Tibial artery (tissue), 4 donors: ENCODE measurements at regions of chr6 and their contacts with region 1.

Region 1: GRCh38 chr6:3751730-3752542 is 423 bp upstream of the PXDC1 start:
- DNase-seq: peak; percentile 89 to 96
- H3K4me3 ChIP-seq: peak overlapping the region; percentile 96 to 97
- H3K27ac ChIP-seq: peak overlapping the region; percentile 99
- H3K4me1 ChIP-seq: peaks cover 0 to 38% (median 21%) of the 10 kb centered on the region in 4 donors
- H3K27me3 ChIP-seq: no peaks in the 10 kb centered on the region
- CTCF ChIP-seq: peak; percentile 40 to 61

Region 2: DNA sequence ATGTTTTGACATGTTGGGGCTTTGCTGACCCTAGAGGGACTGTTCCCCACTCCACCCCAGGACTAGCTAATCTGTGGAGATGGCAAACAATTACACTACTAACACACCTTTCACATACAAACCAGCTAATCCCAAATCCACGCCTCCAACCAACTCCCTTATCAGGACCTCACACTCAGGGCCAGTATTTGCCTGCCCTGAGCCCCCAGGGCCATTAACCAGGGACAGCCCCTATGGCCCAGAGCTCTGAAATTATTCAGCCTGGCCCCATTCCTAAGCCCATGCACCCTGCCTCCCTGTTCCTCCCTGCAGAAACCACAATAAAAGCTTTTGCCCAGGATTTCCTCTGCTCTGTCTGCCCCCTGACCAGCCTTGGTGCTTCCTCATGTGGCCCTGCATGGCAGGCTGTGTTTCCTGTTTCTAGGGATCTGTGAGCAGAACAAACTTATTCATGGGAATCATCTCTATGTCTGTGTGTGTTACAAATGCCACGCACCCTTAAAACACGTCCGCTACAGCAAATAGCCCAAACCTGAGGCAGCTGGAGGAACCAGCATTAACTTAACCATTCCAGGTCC is 121.6 kb before region 1 on chr6:
- intact Hi-C with region 1: no loop called
- DNase-seq: no peak
- H3K4me3 ChIP-seq: no peak overlapping the region
- H3K27ac ChIP-seq: no peak overlapping the region
- H3K4me1 ChIP-seq: peaks cover 0 to 7% (median 0%) of the 10 kb centered on the region in 4 donors
- H3K27me3 ChIP-seq: peaks cover 0 to 13% of the 10 kb centered on the region in 2 donors
- CTCF ChIP-seq: no peak

Region 3: DNA sequence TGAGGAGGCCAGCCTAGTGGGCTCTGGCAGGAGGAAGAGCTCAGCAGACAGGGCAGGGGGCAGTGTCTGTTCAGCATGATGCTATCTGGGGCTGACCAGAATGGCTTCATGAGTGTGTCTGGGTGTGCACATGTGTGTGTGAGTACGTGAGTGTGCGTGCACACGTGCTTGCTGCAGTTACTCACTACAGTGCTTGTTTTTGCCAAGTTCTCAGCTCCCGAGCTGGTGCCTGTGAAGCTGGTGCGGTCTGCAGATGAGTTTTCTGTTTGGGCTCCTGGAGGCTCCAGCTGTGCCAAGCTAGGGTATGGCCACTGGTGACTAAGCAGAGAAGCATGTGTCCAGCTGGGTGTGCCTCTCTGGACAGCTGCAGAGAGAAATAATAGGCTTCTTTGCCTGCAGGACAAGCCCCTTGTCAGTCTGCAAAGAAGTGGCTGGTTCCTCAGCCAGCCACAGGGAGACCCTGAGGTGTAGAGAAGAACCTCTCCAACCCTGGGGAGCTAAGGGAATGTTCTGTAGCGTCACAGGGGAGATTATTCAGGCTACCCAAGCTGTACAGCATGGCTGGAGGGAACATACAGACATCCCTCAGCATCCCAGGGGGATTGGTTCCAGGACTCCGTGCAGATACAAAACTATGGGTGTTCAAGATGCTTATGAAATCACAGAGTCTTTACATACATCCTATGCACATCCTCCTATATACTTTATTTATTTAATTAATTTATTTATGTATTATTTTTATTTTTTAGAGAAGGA is 57.0 kb after region 1 on chr6:
- intact Hi-C with region 1: loop called (anchors 5 kb)
- DNase-seq: peak; percentile 80 to 89
- H3K4me3 ChIP-seq: no peak overlapping the region
- H3K27ac ChIP-seq: peak overlapping the region; percentile 77 to 81
- H3K4me1 ChIP-seq: peaks cover 0 to 94% (median 50%) of the 10 kb centered on the region in 4 donors
- H3K27me3 ChIP-seq: no peaks in the 10 kb centered on the region
- CTCF ChIP-seq: no peak

Region 4: DNA sequence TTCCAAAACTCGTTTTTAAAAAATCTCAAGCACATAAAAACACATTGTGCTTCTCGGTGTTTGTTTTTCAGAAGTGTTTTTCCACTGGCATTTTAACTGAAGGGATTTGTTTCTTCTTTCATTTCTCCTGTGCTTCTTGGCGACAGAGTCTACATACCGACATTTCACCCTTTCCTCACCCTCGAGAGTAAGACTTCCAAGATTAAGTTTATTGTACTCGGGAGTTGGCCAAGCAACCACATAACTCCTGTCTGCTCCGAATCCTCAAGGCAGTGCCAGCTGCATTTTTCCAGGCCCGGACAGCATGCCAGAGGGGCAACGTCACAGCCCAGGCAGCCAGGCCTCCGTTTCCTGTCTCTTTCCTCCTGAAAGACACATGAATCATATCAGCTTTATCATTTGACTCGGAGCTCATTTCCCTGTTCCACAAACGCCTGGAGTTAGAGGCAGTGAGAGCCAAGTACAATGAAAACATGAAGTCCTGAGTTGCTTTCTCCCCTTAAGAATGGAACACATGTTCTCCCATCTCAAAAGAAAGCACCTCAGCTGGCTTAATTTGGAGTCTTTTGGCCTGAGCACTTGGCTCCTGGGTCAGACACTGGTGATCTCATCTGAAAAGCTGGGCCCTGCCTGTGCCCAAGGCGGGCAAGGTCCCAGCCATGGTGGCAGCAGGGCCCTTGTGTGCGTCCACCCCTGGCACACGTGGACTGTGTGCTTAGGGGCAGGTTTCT is 74.1 kb after region 1 on chr6:
- intact Hi-C with region 1: loop called (anchors 5 kb)
- DNase-seq: peak; percentile 92 to 99
- H3K4me3 ChIP-seq: peak overlapping the region; percentile 26 to 40
- H3K27ac ChIP-seq: peak overlapping the region; percentile 83 to 86
- H3K4me1 ChIP-seq: peaks cover 0 to 61% (median 47%) of the 10 kb centered on the region in 4 donors
- H3K27me3 ChIP-seq: no peaks in the 10 kb centered on the region
- CTCF ChIP-seq: no peak

Region 5: GRCh38 chr6:3848925-3849605 is 97.1 kb after region 1 on chr6 and contains the start of gene FAM50B:
- intact Hi-C with region 1: loop called (anchors 5 kb)
- DNase-seq: peak; percentile 91 to 97
- H3K4me3 ChIP-seq: peak within 1 kb of the TSS; percentile 53 to 55
- H3K27ac ChIP-seq: peak within 1 kb of the TSS; percentile 75
- H3K4me1 ChIP-seq: peaks cover 0 to 46% (median 12%) of the 10 kb centered on the region in 4 donors
- H3K27me3 ChIP-seq: no peaks in the 10 kb centered on the region
- CTCF ChIP-seq: peak; percentile 84 to 99

Region 6: DNA sequence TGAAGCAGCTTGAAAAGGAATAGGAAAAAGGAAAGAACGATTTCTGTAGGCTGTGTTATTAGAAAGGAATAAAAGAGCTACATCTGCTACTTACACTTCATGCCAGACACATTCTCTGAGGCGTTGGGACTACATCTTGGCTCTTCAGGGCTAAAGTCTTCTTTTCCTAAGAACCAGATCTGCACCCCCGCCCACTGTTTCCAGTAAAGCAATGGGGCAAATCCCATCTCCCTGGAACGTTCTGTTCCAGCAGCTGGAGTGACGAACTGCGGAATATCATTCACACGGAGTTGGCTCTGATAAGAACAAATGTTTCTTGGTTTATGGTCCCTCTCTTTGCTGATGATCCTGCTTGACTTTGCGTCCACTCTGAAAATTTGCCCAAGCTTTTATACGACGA is 124.2 kb after region 1 on chr6:
- intact Hi-C with region 1: no loop called
- DNase-seq: peak in 1 of 2 donors; percentile 85
- H3K4me3 ChIP-seq: no peak overlapping the region
- H3K27ac ChIP-seq: peak overlapping the region in 1 of 2 donors; percentile 17
- H3K4me1 ChIP-seq: peaks cover 0 to 4% (median 2%) of the 10 kb centered on the region in 4 donors
- H3K27me3 ChIP-seq: no peaks in the 10 kb centered on the region
- CTCF ChIP-seq: no peak